Mammary epithelial cell (primary cell): ENCODE measurements at regions of chr2 and their contacts with region 1.

Region 1: DNA sequence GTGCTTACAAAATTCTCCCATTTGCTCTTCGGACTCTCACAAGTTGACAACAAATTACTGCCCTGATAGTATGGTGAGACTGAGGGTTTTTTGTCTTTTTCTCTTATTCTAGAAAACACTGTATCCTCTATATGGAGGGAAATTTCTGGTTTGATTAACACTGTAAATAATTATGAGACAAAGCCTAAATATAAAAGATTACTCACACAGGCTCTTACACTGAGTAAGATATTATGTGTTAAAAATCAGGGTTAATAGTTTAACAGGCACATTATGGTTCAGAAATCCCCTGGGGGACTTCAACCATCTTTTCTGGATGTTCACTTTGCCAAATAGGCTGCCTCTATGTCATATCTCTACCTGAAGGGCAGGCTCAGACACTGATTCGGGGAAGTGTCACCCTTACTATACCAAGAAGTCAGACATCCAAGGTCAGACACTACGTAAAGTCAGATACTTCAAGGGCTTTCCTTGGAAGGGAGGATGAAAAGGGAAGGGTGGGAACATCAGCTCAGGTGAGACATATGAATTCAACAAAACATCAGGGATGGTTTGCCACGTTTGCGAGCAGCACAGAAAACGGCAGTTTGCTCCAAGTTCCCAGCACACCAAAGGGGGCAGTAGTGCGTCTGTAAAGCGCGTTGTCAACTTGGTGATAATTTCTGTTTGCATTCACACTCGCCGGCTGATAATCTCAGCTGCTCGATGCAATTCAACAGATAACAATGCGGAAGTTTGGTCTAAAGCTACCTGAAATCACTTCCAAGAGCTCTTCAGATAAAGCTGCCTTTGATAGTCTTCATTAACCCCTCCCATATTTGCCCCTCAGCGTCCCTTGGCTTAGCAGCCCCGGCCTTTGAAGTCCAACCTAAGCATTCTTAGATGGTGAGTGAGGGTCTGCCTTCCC is 972 bp upstream of the RASGRP3 start:
- DNase-seq: peak; percentile 77
- H3K4me3 ChIP-seq: peak overlapping the region; percentile 52 to 67 (median 57)
- H3K27ac ChIP-seq: peak overlapping the region; percentile 42
- H3K4me1 ChIP-seq: no peaks in the 10 kb centered on the region
- H3K27me3 ChIP-seq: no peaks in the 10 kb centered on the region
- CTCF ChIP-seq: peak; percentile 84 to 87

Region 2: DNA sequence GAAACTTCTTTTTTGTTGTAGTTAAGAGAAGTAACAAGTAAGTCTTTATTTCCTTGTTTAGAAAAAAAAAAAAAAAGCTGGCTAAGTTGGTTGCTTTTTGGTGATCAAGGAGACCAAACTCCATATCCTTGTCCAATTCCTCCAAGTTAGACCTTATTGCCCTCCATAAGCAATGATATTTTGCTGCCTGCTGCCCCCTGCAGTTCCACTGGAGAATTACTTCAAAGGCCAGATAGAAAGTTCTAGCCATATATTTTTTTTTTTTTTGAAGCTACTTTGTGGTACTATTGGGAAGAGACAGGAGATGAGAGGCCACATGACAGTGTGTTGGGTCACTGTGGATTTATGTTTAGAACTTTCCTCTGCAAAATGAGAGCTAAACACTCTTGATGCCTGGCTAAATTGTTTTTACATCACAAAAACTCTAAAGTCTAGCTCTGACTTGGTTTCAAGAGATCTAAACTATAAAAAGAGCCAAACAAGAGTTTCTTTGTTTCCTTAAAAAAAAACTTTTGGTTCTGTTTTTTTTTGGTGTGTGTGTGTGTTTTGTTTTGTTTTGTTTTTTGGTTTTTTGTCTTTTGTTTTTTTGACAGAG is 79.7 kb before region 1 on chr2:
- CTCF ChIA-PET with region 1: interaction called, 10 read pairs
- dilution Hi-C with region 1: no loop called
- in situ Hi-C with region 1: no loop called
- intact Hi-C with region 1: no loop called
- DNase-seq: peak; percentile 40
- H3K4me3 ChIP-seq: no peak overlapping the region
- H3K27ac ChIP-seq: no peak overlapping the region
- H3K4me1 ChIP-seq: no peaks in the 10 kb centered on the region
- H3K27me3 ChIP-seq: no peaks in the 10 kb centered on the region
- CTCF ChIP-seq: peak; percentile 68 to 75

Region 3: DNA sequence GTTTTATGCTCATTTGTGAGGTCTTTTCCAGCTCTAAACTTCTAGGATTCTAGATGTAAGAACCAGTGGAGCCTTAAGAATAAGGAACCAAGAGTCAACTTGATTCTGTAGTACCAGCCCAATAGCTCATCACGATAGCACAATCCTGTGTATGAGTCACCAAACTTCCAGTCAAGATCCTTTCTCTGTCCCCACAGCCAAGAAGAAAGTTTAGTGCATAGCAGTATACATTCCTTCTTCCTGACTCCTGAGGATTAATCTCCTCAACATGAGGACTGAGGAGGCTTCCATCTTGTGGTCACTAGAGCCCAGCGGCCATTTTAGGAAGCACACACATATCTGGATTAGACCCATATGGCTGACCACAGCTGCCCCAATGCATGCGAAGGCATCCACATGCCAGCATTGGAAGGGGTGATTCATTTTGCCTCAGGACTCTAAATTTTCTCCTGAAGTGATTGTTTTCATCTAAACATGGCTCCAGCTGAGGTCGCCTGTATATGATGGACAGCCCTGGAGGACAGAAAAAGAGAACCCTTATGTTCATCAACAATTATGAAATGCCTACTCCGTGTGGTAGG is 54.4 kb after region 1 on chr2:
- CTCF ChIA-PET with region 1: interaction called, 10 read pairs
- dilution Hi-C with region 1: no loop called
- in situ Hi-C with region 1: no loop called
- intact Hi-C with region 1: no loop called
- DNase-seq: peak; percentile 77
- H3K4me3 ChIP-seq: no peak overlapping the region
- H3K27ac ChIP-seq: no peak overlapping the region
- H3K4me1 ChIP-seq: peaks cover 9% of the 10 kb centered on the region
- H3K27me3 ChIP-seq: no peaks in the 10 kb centered on the region
- CTCF ChIP-seq: no peak

Region 4: GRCh38 chr2:33583194-33583938 is 107.9 kb after region 1 on chr2:
- CTCF ChIA-PET with region 1: interaction called, 6 read pairs
- dilution Hi-C with region 1: no loop called
- in situ Hi-C with region 1: no loop called
- intact Hi-C with region 1: loop called (anchors 1 kb)
- DNase-seq: peak; percentile 7
- H3K4me3 ChIP-seq: no peak overlapping the region
- H3K27ac ChIP-seq: no peak overlapping the region
- H3K4me1 ChIP-seq: no peaks in the 10 kb centered on the region
- H3K27me3 ChIP-seq: no peaks in the 10 kb centered on the region
- CTCF ChIP-seq: peak; percentile 71 to 85

Region 5: GRCh38 chr2:33599175-33599942 is 123.9 kb after region 1 on chr2 and contains the start of gene FAM98A:
- CTCF ChIA-PET with region 1: no interaction called
- dilution Hi-C with region 1: no loop called
- in situ Hi-C with region 1: no loop called
- intact Hi-C with region 1: loop called (anchors 1 kb)
- DNase-seq: peak; percentile 98
- H3K4me3 ChIP-seq: peak within 1 kb of the TSS; percentile 55 to 100 (median 93)
- H3K27ac ChIP-seq: peak within 1 kb of the TSS; percentile 46
- H3K4me1 ChIP-seq: peaks cover 5% of the 10 kb centered on the region
- H3K27me3 ChIP-seq: no peaks in the 10 kb centered on the region
- CTCF ChIP-seq: no peak
- total RNA-seq, gene FAM98A: 32.7 to 63.1 TPM